BJ (cell line): ENCODE measurements at regions of chr12 and their contacts with region 1.

Region 1: GRCh38 chr12:18250313-18250916 is 10.9 kb upstream of the PIK3C2G start:
- DNase-seq: no peak
- H3K4me3 ChIP-seq: no peak overlapping the region
- H3K27me3 ChIP-seq: no peaks in the 10 kb centered on the region
- CTCF ChIP-seq: peak; percentile 65

Region 2: DNA sequence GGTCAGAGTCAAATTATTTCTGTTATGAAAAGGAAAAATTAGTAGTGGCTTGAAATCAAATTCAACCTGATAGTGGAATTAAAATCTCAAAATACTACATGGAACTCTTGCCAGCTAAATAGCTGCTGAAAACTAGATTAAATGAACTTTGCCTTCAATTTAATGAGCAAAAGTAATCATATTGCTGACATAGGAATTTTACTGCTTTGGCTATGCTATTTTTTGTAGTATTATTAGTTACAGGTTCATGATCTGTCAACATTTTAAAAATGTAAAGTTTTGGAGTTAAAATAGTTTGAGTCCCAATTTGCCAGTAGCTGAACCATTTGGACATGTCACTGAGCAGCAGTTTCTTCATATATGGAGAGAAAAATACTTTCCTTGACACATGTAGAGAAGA is 241.8 kb before region 1 on chr12:
- CTCF ChIA-PET with region 1: no interaction called
- POLR2A ChIA-PET with region 1: no interaction called
- DNase-seq: no peak
- H3K4me3 ChIP-seq: no peak overlapping the region
- H3K27me3 ChIP-seq: no peaks in the 10 kb centered on the region
- CTCF ChIP-seq: no peak

Region 3: DNA sequence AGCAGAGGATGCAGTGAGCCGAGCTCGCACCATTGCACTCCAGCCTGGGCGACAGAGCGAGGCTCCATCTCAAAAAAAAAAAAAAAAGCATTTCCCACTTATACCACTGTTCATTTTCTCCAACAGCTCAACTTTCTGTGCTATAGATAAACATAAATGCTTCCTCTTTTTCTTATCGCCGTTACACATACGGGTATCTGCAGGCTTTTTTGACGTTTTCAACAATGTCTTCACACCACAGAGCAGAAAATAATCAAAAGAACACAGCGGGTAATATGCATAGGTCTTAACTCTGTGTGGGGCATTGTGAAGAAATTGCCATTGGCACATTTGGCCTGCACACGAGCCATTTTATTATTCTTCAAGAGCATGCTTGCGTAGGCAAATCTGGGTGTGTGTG is 573.9 kb after region 1 on chr12:
- CTCF ChIA-PET with region 1: no interaction called
- POLR2A ChIA-PET with region 1: interaction called, 13 read pairs
- DNase-seq: no peak
- H3K4me3 ChIP-seq: no peak overlapping the region
- H3K27me3 ChIP-seq: no peaks in the 10 kb centered on the region
- CTCF ChIP-seq: no peak